Ovary (tissue), 10 donors: ENCODE measurements at regions of chr14 and their contacts with region 1.

Region 1: GRCh38 chr14:73741386-73741875 is 27.2 kb upstream of the PNMA1 start:
- DNase-seq: peak; percentile 64 to 76 (median 71)
- H3K4me3 ChIP-seq: peak overlapping the region; percentile 24
- H3K27ac ChIP-seq: peak overlapping the region; percentile 46 to 82
- H3K4me1 ChIP-seq: peaks cover 57% of the 10 kb centered on the region
- H3K27me3 ChIP-seq: no peaks in the 10 kb centered on the region
- CTCF ChIP-seq: no peak
- EP300 ChIP-seq: no peak
- POLR2A ChIP-seq: no peak

Region 2: GRCh38 chr14:73825551-73826188 is 84.2 kb after region 1 on chr14:
- intact Hi-C with region 1: loop called in 2 of 4 experiments (anchors 5 to 10 kb)
- DNase-seq: peak; percentile 92 to 98 (median 95)
- H3K4me3 ChIP-seq: no peak overlapping the region
- H3K27ac ChIP-seq: peak overlapping the region in 1 of 2 donors; percentile 6
- H3K4me1 ChIP-seq: no peaks in the 10 kb centered on the region
- H3K27me3 ChIP-seq: no peaks in the 10 kb centered on the region
- CTCF ChIP-seq: peak; percentile 67 to 85 (median 84)
- EP300 ChIP-seq: no peak
- POLR2A ChIP-seq: no peak